Posterior cingulate gyrus (tissue), 11 donors: ENCODE measurements at regions of chr10 and their contacts with region 1.

Region 1: GRCh38 chr10:34528320-34528719 is 286.8 kb downstream of the PARD3 start:
- DNase-seq: no peak

Region 2: DNA sequence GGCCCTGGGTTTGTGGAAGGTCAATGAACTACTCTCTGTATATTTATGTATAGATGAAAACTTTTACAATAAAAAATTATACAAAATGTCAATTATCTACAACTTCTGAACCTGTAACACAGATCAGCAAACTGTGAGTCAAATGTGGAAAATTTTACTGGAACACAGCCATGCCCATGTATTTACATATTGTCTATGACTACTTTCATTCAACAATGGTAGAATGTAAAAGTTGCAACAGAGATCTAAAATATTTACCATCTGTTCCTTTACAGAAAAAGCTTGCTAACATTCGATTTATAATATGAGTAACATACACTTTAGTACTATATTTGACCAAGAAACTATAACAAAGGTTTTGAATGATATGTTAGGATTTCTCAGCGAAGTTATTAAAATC is 194.8 kb before region 1 on chr10:
- intact Hi-C with region 1: no loop called
- DNase-seq: no peak

Region 3: DNA sequence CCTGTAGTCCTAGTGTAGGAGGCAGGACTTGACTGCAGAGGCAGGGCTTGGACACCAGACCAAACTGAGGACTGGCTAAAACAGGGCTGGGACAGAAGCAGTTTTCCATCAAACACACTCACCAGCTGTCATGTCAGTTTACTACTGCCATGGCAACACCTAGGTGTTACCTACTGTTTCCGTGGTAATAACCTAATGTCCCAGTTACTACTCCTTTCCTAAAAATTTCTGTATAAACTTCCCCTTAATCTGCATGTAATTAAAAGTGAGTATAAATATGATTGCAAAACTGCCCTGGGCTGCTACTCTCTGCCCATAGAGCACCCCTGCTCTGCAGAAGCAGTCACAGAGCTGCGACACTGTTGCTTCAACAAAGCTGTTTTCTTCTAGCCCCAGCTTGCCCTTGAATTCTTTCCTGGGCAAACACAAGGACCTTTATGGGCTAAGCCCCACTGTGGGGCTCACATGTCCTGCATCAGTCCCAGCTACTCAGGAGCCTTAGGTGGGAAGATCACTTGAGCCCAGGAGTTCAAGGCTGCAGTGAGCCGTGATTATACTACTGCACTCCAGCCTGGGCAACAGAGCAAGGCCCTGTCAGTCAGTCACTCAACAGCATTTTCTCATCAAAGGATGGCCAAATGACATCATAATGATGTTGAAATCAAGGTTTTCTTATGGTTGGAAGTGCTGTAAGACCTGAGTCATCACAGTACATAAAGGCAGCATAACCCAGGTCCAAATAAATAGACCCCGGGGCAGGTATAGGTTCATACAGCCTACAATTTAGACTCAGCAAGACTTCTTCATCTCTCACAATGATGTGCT is 54.5 kb before region 1 on chr10:
- intact Hi-C with region 1: no loop called
- DNase-seq: no peak

Region 4: GRCh38 chr10:34489973-34490745 is 38.2 kb before region 1 on chr10:
- intact Hi-C with region 1: no loop called
- DNase-seq: no peak

Region 5: GRCh38 chr10:34637418-34637911 is 109.1 kb after region 1 on chr10:
- intact Hi-C with region 1: loop called (anchors 5 kb)
- DNase-seq: peak; percentile 40 to 95 (median 75)